Posterior cingulate gyrus (tissue), 11 donors: ENCODE measurements at regions of chr10 and their contacts with region 1.

Region 1: GRCh38 chr10:101840741-101841453 is 2.7 kb downstream of the KCNIP2 start:
- DNase-seq: peak; percentile 79 to 98 (median 88)

Region 2: GRCh38 chr10:101587725-101588653 is 252.9 kb before region 1 on chr10 and contains the starts of genes DPCD and POLL:
- intact Hi-C with region 1: no loop called
- DNase-seq: peak; percentile 93 to 99 (median 98)

Region 3: DNA sequence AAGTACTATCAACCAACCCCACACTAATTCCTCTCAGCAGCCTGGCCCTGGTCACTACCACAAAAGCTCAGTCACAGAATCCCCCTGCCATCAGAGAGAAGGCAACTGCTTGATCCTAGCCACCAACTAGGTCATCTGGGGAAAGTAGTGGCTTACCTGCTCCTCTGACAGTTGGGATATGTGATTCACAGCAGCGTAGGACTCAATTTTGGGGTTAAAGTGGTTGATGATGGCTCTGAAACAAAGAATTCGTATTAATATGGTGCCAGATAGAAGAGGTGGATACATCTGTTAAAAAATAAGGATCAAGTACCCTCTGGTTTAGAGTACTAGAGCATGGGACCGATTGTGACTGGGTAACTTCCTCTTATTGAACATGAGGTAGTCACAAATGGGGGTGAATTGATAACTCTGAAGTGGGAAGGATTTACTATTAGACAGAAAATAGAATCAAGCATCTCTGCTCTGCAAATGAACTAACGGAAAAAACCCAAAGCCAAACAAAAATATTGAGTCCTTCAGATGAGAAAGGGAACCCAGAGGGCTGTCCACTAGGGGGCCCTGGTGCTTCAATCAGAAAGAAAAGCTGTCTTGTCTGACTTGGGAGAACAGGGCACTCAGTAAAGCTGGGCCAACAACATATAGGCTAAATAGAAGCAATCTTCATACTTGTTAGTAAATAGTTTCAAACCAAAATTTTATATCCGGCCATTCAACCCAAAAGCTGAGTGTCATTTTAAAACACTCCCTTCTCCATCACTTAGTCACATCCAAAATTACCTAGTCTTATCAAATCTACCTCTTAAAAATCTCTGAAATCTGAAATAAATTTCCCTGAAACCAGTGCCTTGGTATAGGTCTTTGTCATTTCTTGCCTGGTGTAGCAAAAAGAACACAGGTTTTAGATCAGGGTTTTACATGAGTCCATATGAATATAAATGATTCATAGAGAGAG is 48.6 kb after region 1 on chr10:
- intact Hi-C with region 1: loop called (anchors 2 kb)
- DNase-seq: peak; percentile 62 to 96 (median 86)

Region 4: GRCh38 chr10:102009801-102010425 is 169.0 kb after region 1 on chr10:
- intact Hi-C with region 1: loop called (anchors 1 kb)
- DNase-seq: peak in 4 of 10 donors; percentile 12 to 45 (median 30)

Region 5: GRCh38 chr10:102072673-102073527 is 232.0 kb after region 1 on chr10:
- intact Hi-C with region 1: loop called (anchors 1 kb)
- DNase-seq: peak; percentile 55 to 95 (median 86)